Transverse colon (tissue), 4 donors: ENCODE measurements at regions of chr18 and their contacts with region 1.

Region 1: DNA sequence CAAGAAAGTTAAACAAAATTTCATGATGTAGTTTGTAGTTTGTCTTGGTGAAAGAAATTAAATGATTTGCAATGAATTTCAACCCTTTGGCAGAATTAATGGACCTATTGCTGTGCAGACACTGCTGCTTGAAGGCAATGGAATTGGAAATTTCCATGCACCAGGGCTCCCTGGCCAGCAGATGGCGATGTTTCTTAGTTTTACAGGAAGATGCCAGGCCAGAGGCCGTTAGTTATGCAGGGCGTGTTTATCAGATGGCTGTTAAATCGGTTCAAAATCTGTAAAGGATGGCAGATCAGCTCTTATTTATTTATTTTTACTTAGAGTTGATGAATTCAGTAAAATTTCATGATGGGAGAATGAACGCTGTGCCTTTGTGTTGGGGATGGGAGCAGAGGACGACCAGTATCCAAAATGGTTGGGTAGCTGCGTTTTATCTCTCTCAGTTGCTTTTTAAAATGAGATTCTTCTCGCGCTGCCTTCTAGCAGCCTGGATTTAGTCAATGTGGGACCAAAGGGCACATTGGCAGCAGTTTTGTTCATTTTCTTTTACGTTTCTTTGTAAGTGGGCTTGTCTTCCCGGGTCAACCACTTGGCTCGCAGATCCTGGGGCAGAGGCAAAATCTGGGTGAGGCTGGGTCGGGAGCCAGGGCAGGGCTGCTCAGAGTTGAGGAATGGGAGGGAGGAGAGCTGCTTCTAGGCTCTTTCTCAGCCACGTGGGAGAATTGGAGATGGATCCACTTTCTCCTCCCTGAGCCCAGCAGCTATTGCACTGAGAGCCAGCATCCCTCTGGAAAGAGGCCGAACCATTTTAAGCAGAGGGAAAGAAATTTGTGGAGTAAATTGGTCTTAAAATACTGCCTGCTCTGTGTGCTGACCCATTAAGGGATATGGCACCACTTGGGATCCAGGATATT is 344.0 kb downstream of the PIK3C3 start:
- DNase-seq: peak; percentile 69
- H3K4me3 ChIP-seq: no peak overlapping the region
- H3K27ac ChIP-seq: no peak overlapping the region
- H3K4me1 ChIP-seq: no peaks in the 10 kb centered on the region
- H3K27me3 ChIP-seq: no peaks in the 10 kb centered on the region
- CTCF ChIP-seq: peak; percentile 70 to 92 (median 89)
- EP300 ChIP-seq: no peak
- POLR2A ChIP-seq: no peak

Region 2: GRCh38 chr18:43265465-43265864 is 966.4 kb after region 1 on chr18:
- in situ Hi-C with region 1: loop called in 1 of 4 experiments (anchors 25 kb)
- intact Hi-C with region 1: loop called (anchors 5 kb)
- DNase-seq: no peak
- H3K4me3 ChIP-seq: no peak overlapping the region
- H3K27ac ChIP-seq: no peak overlapping the region
- H3K4me1 ChIP-seq: no peaks in the 10 kb centered on the region
- H3K27me3 ChIP-seq: no peaks in the 10 kb centered on the region
- CTCF ChIP-seq: no peak
- EP300 ChIP-seq: no peak
- POLR2A ChIP-seq: no peak

Region 3: GRCh38 chr18:43271593-43272432 is 972.8 kb after region 1 on chr18:
- in situ Hi-C with region 1: loop called in 1 of 4 experiments (anchors 25 kb)
- intact Hi-C with region 1: loop called (anchors 5 kb)
- DNase-seq: no peak
- H3K4me3 ChIP-seq: no peak overlapping the region
- H3K27ac ChIP-seq: no peak overlapping the region
- H3K4me1 ChIP-seq: no peaks in the 10 kb centered on the region
- H3K27me3 ChIP-seq: peaks cover 8% of the 10 kb centered on the region
- CTCF ChIP-seq: peak; percentile 66 to 79 (median 70)
- EP300 ChIP-seq: no peak
- POLR2A ChIP-seq: no peak